ENCODE measurements at regions of chr14 and their contacts with region 1.

Region 1: DNA sequence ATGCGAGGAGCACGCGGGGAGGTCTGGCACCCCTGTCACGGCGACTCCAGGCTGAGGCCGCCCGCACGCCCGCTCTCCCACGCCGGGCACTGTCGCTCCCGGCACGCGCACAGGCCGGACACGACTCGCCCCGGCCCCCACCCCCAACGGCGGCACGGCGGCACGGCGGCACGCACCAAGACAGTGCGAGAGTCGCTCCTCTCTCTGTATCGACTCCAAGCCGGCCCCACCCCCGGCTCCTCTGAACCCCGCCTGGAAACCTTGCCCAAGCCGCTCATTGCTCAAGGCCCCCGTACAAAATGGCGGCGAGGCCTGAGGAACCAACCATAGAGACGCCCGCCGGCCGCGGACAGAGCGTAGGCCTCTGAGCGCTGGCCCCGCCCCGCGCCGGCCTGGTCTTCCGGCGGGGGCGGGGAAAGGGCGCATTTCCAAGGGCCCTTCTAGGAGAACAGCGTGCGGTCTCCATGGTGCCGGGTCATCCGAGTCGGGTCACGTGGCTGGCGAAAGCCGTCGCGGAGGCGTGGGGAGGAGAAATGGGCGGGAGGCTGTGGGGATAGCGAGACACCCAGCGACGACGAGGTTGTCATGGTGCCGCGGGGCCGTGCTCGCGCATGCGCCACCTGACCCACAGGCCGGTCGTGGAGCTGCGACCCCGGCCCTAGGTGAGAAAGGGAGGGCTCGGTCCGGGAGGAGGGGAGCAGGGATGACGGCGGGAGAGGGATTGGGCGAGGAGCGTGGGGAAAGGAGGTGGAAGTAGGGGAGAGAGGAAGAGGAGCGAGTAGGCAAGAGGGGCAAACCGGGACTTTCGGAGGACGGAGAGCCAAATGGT is at the start of gene CIPC:
- DNase-seq: peak; percentile 95 to 98
- H3K4me3 ChIP-seq: peak within 1 kb of the TSS; percentile 87 to 96 (median 88)
- H3K27ac ChIP-seq: peak within 1 kb of the TSS; percentile 86
- H3K4me1 ChIP-seq: peaks cover 0 to 8% (median 4%) of the 10 kb centered on the region in 4 experiments; a peak in 4 of 7 replicates
- H3K27me3 ChIP-seq: no peaks in the 10 kb centered on the region
- CTCF ChIP-seq: no peak
- EP300 ChIP-seq: peak in 1 of 2 experiments; percentile 60; a peak in 1 of 3 replicates
- POLR2A ChIP-seq: no peak
- RAD21 ChIP-seq: peak; percentile 13 to 16; a peak in 2 of 4 replicates
- total RNA-seq, gene CIPC: 31.7 and 32.7 TPM in 2 replicates

Region 2: DNA sequence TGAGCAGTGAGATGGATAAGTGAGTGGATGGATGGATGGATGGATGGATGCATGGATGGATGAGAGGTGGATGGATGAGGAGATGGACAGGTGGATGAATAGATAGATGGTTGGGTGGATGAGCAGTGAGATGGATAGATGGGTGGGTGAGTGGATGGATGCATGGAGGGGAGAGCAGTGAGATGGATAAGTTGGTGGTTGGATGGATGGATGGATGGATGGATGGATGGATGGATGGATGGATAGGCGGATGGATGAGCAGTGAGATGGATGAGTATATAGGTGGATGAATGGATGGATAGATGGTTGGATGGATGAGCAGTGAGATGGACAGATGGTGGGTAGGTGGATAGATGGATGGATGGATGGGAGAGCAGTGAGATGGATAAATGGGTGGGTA is 241.1 kb before region 1 on chr14:
- CTCF ChIA-PET with region 1: interaction called, 10 read pairs
- POLR2A ChIA-PET with region 1: no interaction called
- DNase-seq: no peak
- H3K4me3 ChIP-seq: no peak overlapping the region
- H3K27ac ChIP-seq: no peak overlapping the region
- H3K4me1 ChIP-seq: peaks cover 0 to 3% (median 0%) of the 10 kb centered on the region in 4 experiments; a peak in 4 of 7 replicates
- H3K27me3 ChIP-seq: no peaks in the 10 kb centered on the region; a peak in 1 of 7 replicates
- CTCF ChIP-seq: no peak
- EP300 ChIP-seq: no peak
- POLR2A ChIP-seq: no peak
- RAD21 ChIP-seq: no peak

Region 3: DNA sequence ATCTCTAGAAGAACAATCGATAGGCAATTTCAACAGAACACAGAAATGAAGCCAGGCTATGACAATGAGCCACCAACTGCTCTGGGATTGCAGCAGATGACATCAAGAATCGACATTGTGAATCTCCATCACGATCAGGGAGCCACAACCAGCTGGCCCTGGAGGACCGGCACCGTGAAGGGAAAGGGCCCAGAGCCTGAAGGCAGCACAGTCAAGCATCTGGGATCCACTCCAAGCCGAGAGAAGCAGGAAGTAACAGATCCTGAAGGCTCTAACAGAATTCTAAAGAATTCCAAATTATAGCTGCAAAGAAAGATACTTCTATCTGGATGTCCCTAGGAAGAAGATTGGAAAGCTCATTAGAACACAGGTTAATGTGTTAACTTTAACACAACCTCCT is 210.7 kb before region 1 on chr14:
- CTCF ChIA-PET with region 1: interaction called, 17 read pairs
- POLR2A ChIA-PET with region 1: no interaction called
- DNase-seq: no peak
- H3K4me3 ChIP-seq: no peak overlapping the region
- H3K27ac ChIP-seq: no peak overlapping the region
- H3K4me1 ChIP-seq: peaks cover 0 to 6% (median 3%) of the 10 kb centered on the region in 4 experiments; a peak in 4 of 7 replicates
- H3K27me3 ChIP-seq: peaks cover 0 to 3% (median 1%) of the 10 kb centered on the region in 4 experiments; a peak in 1 of 7 replicates
- CTCF ChIP-seq: no peak
- EP300 ChIP-seq: no peak
- POLR2A ChIP-seq: no peak
- RAD21 ChIP-seq: no peak

Region 4: DNA sequence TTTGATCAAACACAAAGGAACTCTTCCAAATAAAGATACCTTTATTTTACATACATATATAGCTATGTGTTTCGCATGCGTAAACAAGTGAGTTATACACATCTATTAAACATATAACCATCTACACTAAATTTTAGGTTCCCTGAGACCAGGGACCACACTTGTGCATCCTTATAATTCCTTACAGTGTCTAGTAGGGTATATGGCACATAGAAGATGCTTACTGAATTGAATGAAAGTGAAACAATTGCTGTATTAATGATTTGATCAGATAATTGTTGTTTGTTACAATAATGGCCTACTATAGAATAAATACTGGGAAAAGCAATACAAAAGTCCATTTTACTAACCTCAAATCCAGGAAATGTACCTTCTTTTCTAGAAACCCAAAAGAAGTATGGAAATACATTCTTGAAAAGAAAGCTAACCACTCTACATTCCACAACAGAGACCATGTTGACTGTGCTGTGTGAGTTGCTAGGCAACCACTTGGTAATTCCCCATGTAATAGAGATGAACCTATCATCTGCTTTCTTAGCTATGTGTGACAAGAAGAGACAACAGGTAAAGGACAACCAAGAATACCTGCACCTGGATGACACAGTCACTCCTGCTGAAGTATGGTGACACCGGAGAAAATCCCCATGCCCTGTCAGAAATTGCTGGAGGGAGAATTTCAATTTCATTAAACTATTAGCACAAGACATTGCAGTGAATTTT is 11.7 kb before region 1 on chr14:
- CTCF ChIA-PET with region 1: interaction called, 603 read pairs
- POLR2A ChIA-PET with region 1: interaction called, 5 read pairs
- DNase-seq: no peak
- H3K4me3 ChIP-seq: no peak overlapping the region
- H3K27ac ChIP-seq: peak overlapping the region; percentile 54
- H3K4me1 ChIP-seq: peaks cover 10 to 30% (median 19%) of the 10 kb centered on the region in 4 experiments
- H3K27me3 ChIP-seq: no peaks in the 10 kb centered on the region
- CTCF ChIP-seq: no peak
- EP300 ChIP-seq: peak in 1 of 2 experiments; percentile 90; a peak in 2 of 3 replicates
- POLR2A ChIP-seq: no peak; a peak in 1 of 3 replicates
- RAD21 ChIP-seq: no peak

Region 5: DNA sequence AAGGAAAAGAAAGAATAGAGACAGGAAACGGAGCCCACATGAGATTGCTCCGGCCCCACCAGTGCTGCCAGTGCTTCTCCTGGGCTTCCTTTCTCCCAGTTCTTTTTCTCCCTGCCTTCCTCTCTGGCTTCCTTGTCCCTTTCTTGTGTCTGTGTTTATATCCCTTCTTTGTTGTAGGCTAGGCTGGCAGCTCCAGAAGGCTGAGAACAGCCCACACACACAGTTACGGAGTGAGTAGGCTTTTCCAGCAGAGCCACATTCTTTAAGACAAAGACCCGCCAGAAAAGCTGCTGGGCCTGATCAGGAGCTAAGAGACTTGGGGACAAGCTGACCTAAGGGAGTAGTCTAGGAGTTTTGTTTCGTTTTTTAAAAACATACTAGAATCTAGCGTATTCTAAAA is 13.1 kb after region 1 on chr14:
- CTCF ChIA-PET with region 1: interaction called, 1,490 read pairs
- POLR2A ChIA-PET with region 1: interaction called, 49 read pairs
- DNase-seq: peak in 1 of 2 experiments; percentile 59
- H3K4me3 ChIP-seq: peak overlapping the region in 1 of 4 experiments; percentile 39; a peak in 1 of 8 replicates
- H3K27ac ChIP-seq: peak overlapping the region; percentile 76
- H3K4me1 ChIP-seq: peaks cover 0 to 21% (median 14%) of the 10 kb centered on the region in 4 experiments; a peak in 6 of 7 replicates
- H3K27me3 ChIP-seq: no peaks in the 10 kb centered on the region
- CTCF ChIP-seq: no peak
- EP300 ChIP-seq: peak in 1 of 2 experiments; percentile 33; a peak in 1 of 3 replicates
- POLR2A ChIP-seq: peak in 1 of 2 experiments; percentile 73; a peak in 2 of 3 replicates
- RAD21 ChIP-seq: no peak

Region 6: GRCh38 chr14:77124345-77125280 is 26.7 kb after region 1 on chr14:
- CTCF ChIA-PET with region 1: interaction called, 1,490 read pairs
- POLR2A ChIA-PET with region 1: interaction called, 11 read pairs
- DNase-seq: peak in 1 of 2 experiments; percentile 81
- H3K4me3 ChIP-seq: peak overlapping the region; percentile 62 to 79 (median 68)
- H3K27ac ChIP-seq: no peak overlapping the region
- H3K4me1 ChIP-seq: peaks cover 20 to 36% (median 24%) of the 10 kb centered on the region in 4 experiments
- H3K27me3 ChIP-seq: peaks cover 0 to 2% (median 0%) of the 10 kb centered on the region in 4 experiments; a peak in 1 of 7 replicates
- CTCF ChIP-seq: peak; percentile 66 to 78 (median 68)
- EP300 ChIP-seq: no peak
- POLR2A ChIP-seq: peak in 1 of 2 experiments; percentile 30; a peak in 1 of 3 replicates
- RAD21 ChIP-seq: peak; percentile 33 to 65; a peak in 3 of 4 replicates

Region 7: DNA sequence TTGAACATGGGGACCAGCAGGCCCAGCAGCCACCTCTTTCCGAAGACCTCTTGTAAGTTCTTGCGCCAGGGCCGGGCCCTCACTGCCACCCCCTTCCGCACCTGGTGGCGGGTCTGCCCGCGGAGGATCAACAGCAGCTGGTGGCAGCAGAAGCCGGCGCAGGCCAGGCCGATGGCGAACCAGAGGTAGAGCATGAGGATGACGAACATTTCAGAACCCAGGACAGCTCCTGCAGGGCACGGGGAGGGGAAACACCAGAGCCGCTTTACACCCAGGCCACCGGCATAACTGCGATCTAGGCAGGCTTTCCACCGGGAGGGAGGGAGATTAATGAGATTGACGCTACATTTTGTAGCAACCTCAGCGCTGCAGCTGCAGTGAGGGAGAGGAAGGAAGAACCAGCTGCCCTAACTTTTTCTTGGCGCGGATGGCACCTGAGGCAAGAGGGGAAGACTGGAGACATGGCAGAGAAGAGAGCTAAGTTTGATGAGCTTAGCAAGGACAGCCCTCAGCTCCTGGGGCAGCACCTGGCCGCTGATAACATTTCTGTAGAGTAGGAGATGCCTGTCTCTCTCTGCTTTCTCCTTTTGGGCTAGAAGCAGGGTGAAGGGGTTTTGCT is 35.9 kb after region 1 on chr14:
- CTCF ChIA-PET with region 1: interaction called, 1,490 read pairs
- POLR2A ChIA-PET with region 1: interaction called, 7 read pairs
- DNase-seq: peak; percentile 80 to 84
- H3K4me3 ChIP-seq: no peak overlapping the region
- H3K27ac ChIP-seq: no peak overlapping the region
- H3K4me1 ChIP-seq: no peaks in the 10 kb centered on the region
- H3K27me3 ChIP-seq: no peaks in the 10 kb centered on the region
- CTCF ChIP-seq: no peak
- EP300 ChIP-seq: no peak
- POLR2A ChIP-seq: no peak
- RAD21 ChIP-seq: 0 out of 4 replicates have a peak, but pooled peaks of 1 of the 2 experiments have one; percentile 8

Region 8: GRCh38 chr14:77181603-77182437 is 83.9 kb after region 1 on chr14 and contains the start of gene TMEM63C:
- CTCF ChIA-PET with region 1: no interaction called
- POLR2A ChIA-PET with region 1: no interaction called
- DNase-seq: peak; percentile 92 to 95
- H3K4me3 ChIP-seq: peak within 1 kb of the TSS; percentile 59 to 83 (median 72)
- H3K27ac ChIP-seq: no peak within 1 kb of the TSS
- H3K4me1 ChIP-seq: peaks cover 3 to 11% (median 7%) of the 10 kb centered on the region in 4 experiments; a peak in 6 of 7 replicates
- H3K27me3 ChIP-seq: peaks cover 0 to 3% (median 1%) of the 10 kb centered on the region in 4 experiments; a peak in 3 of 7 replicates
- CTCF ChIP-seq: no peak
- EP300 ChIP-seq: peak; percentile 3 to 44; a peak in 2 of 3 replicates
- POLR2A ChIP-seq: no peak
- RAD21 ChIP-seq: 0 out of 4 replicates have a peak, but pooled peaks of 1 of the 2 experiments have one; percentile 7
- total RNA-seq, gene TMEM63C: 7.0 and 7.6 TPM in 2 replicates

Measured in H1 (cell line).